ENCODE measurements at regions of chr22 and their contacts with region 1.

Region 1: DNA sequence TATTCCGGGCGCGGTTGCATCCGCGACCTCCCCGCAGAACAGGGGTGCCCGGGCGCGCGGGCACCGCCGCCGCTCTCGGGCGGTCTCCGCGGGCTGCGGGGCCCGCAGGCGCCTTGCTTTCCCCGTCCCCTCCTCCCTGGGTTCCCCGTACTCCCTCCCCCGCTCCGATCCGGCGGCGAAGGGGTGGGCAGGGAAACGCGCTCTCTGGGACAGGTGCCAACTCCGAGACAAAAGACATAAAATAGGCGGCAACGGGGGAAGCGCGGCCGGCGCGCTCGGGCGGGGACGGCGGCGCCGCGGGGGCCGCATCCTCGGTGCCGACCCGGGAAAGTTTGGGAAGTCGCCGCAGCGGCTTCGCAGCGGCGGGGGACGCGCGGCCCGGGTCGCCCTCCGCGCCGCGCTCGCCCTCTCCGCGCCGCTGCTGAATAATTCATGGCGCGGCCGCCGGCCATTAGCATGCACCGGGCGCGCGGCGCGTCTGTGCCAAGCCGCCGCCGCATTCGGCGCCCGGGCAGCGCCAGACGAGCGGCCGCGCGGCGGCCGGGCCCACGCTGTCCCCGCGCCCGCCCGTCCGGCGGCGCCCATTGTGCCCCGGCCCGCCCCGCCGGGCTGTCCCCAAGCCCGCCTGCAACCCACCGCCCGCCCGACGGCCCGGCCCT is 78.7 kb upstream of the PPARA start:
- DNase-seq: peak; percentile 52
- H3K4me3 Mint-ChIP-seq: peak overlapping the region; percentile 82
- H3K27ac Mint-ChIP-seq: peak overlapping the region; percentile 86
- H3K4me1 Mint-ChIP-seq: peaks cover 60% of the 10 kb centered on the region
- H3K27me3 Mint-ChIP-seq: peaks cover 2% of the 10 kb centered on the region

Region 2: DNA sequence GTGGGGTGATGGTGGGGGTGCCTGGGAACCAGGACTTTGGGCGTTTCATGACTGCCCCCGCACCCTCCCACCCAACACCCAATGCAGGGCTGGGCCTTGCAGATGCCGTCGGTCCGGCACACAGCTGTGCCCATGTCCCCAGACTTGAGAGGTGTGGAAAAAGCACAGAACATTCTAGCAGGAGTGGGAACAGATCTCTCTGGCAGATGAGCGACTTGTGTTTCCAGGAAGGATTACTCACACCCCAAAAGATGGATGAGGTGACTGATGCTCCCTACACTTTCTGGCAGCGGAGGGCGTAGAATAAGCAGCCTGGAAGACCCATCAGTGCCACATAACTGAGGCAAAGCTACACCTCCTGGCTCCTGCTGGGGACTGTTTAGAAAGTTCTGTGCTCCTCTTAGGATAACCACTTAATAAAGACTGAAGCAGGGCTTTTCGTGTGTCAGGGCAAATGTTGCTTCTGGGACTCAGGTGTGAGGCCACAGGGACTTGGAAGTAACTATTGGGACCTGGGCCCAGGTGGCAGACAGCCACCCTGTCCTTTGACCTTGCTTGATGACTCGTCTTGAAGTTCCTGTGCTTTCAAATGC is 544.7 kb before region 1 on chr22:
- CTCF ChIA-PET with region 1: no interaction called
- POLR2A ChIA-PET with region 1: no interaction called
- DNase-seq: no peak
- H3K4me3 Mint-ChIP-seq: no peak overlapping the region
- H3K27ac Mint-ChIP-seq: no peak overlapping the region
- H3K4me1 Mint-ChIP-seq: no peaks in the 10 kb centered on the region
- H3K27me3 Mint-ChIP-seq: no peaks in the 10 kb centered on the region

Region 3: GRCh38 chr22:46013460-46014416 is 57.8 kb before region 1 on chr22:
- CTCF ChIA-PET with region 1: interaction called, 5 read pairs
- POLR2A ChIA-PET with region 1: interaction called, 10 read pairs
- DNase-seq: peak; percentile 84
- H3K4me3 Mint-ChIP-seq: peak overlapping the region; percentile 82
- H3K27ac Mint-ChIP-seq: peak overlapping the region; percentile 72
- H3K4me1 Mint-ChIP-seq: peaks cover 13% of the 10 kb centered on the region
- H3K27me3 Mint-ChIP-seq: no peaks in the 10 kb centered on the region

Region 4: GRCh38 chr22:46035742-46036557 is 35.6 kb before region 1 on chr22:
- CTCF ChIA-PET with region 1: interaction called, 9 read pairs
- POLR2A ChIA-PET with region 1: interaction called, 32 read pairs
- DNase-seq: peak; percentile 100
- H3K4me3 Mint-ChIP-seq: peak overlapping the region; percentile 84
- H3K27ac Mint-ChIP-seq: peak overlapping the region; percentile 90
- H3K4me1 Mint-ChIP-seq: peaks cover 17% of the 10 kb centered on the region
- H3K27me3 Mint-ChIP-seq: no peaks in the 10 kb centered on the region

Region 5: GRCh38 chr22:46044621-46045438 is 26.8 kb before region 1 on chr22:
- CTCF ChIA-PET with region 1: interaction called, 3 read pairs
- POLR2A ChIA-PET with region 1: interaction called, 12 read pairs
- DNase-seq: peak; percentile 48
- H3K4me3 Mint-ChIP-seq: peak overlapping the region; percentile 77
- H3K27ac Mint-ChIP-seq: peak overlapping the region; percentile 40
- H3K4me1 Mint-ChIP-seq: peaks cover 18% of the 10 kb centered on the region
- H3K27me3 Mint-ChIP-seq: peaks cover 1% of the 10 kb centered on the region

Region 6: DNA sequence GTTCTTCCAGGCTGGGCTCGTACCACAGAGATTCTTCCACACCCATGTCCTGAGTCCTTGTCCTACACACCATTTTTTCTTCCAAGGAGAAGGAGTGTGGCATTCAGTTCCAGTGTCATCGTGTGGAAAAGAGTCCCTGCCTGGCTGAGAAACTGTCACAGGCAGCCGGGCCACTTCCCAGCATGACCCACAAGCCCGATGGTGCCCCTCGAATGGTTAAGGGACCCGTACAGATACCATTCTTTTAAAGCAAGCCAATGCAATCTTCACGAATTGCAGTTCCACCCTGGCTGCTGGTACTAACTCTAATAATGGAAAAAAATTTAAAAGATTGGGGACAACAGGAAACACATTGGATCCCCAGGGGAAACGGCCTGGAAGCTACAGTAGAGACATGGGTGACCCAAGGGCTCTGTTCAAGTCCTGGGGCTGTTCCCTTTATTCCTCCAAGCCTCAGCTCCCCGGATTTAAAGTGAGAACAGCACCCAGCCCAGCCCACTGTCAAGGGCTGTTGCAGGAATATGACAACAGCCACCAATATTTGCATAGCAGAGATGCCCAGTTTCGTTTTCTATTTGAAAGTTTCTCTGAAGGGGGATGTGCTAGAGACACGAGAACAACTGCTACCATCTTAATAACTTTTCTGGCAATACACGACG is 13.7 kb before region 1 on chr22:
- CTCF ChIA-PET with region 1: interaction called, 3 read pairs
- POLR2A ChIA-PET with region 1: interaction called, 41 read pairs
- DNase-seq: peak; percentile 60
- H3K4me3 Mint-ChIP-seq: peak overlapping the region; percentile 53
- H3K27ac Mint-ChIP-seq: peak overlapping the region; percentile 90
- H3K4me1 Mint-ChIP-seq: peaks cover 40% of the 10 kb centered on the region
- H3K27me3 Mint-ChIP-seq: peaks cover 2% of the 10 kb centered on the region

Region 7: GRCh38 chr22:46087336-46088277 is 16.0 kb after region 1 on chr22:
- CTCF ChIA-PET with region 1: no interaction called
- POLR2A ChIA-PET with region 1: no interaction called
- DNase-seq: no peak
- H3K4me3 Mint-ChIP-seq: no peak overlapping the region
- H3K27ac Mint-ChIP-seq: no peak overlapping the region
- H3K4me1 Mint-ChIP-seq: peaks cover 10% of the 10 kb centered on the region
- H3K27me3 Mint-ChIP-seq: no peaks in the 10 kb centered on the region

Region 8: GRCh38 chr22:46131151-46131587 is 59.6 kb after region 1 on chr22:
- CTCF ChIA-PET with region 1: no interaction called
- POLR2A ChIA-PET with region 1: no interaction called
- DNase-seq: no peak
- H3K4me3 Mint-ChIP-seq: no peak overlapping the region
- H3K27ac Mint-ChIP-seq: no peak overlapping the region
- H3K4me1 Mint-ChIP-seq: no peaks in the 10 kb centered on the region
- H3K27me3 Mint-ChIP-seq: no peaks in the 10 kb centered on the region

Measured in activated CD4-positive, alpha-beta memory T cell treated with anti-CD3 and anti-CD28 coated beads, Interleukin-2, amount 10 ng/mL, durations not matched to agents 7 days and 5 days (primary cell).